Breast epithelium (tissue), 4 donors: ENCODE measurements at regions of chr18 and their contacts with region 1.

Region 1: DNA sequence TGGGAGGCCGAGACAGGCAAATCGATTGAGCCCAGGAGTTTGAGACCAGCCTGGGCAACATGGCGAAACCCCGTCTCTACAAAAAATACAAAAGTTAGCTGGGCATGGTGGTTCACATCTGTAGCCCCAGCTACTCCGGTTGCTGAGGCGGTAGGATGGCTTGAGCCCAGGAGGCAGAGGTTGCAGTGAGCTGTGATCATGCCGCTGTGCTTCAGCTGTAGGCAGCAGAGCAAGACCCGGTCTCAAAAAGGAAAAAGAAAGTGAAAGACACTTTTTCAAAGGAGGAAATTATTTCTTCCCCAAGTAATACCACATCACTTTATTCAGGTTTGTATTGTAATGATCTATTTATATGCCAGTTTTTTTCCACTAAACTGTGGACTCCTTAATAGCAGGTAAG is 35.7 kb upstream of the TAF4B start:
- DNase-seq: no peak
- H3K4me3 ChIP-seq: no peak overlapping the region
- H3K27ac ChIP-seq: no peak overlapping the region
- H3K4me1 ChIP-seq: no peaks in the 10 kb centered on the region
- H3K27me3 ChIP-seq: no peaks in the 10 kb centered on the region
- CTCF ChIP-seq: no peak
- POLR2A ChIP-seq: no peak

Region 2: DNA sequence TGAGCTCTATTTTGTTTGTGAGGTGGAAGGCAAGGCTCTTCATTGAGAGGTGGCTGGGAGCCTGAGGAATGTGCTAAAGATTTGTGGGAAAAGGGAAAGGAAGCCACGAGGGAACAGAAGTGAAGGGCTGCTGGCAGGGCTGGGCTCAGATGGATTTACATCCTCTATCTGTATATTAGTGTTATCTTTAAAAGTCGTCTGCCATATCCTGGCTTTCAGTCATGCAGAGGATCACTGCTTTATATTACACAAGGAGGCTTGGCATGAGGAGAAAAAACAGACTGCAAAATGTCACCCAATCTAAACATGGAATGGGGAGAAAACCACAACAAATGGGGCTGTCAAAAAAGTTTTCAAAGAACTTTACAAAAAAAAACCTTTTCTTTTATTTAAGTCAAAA is 1295.6 kb before region 1 on chr18:
- intact Hi-C with region 1: loop called (anchors 5 kb)
- DNase-seq: no peak
- H3K4me3 ChIP-seq: no peak overlapping the region
- H3K27ac ChIP-seq: no peak overlapping the region
- H3K4me1 ChIP-seq: no peaks in the 10 kb centered on the region
- H3K27me3 ChIP-seq: no peaks in the 10 kb centered on the region
- CTCF ChIP-seq: no peak
- POLR2A ChIP-seq: no peak

Region 3: DNA sequence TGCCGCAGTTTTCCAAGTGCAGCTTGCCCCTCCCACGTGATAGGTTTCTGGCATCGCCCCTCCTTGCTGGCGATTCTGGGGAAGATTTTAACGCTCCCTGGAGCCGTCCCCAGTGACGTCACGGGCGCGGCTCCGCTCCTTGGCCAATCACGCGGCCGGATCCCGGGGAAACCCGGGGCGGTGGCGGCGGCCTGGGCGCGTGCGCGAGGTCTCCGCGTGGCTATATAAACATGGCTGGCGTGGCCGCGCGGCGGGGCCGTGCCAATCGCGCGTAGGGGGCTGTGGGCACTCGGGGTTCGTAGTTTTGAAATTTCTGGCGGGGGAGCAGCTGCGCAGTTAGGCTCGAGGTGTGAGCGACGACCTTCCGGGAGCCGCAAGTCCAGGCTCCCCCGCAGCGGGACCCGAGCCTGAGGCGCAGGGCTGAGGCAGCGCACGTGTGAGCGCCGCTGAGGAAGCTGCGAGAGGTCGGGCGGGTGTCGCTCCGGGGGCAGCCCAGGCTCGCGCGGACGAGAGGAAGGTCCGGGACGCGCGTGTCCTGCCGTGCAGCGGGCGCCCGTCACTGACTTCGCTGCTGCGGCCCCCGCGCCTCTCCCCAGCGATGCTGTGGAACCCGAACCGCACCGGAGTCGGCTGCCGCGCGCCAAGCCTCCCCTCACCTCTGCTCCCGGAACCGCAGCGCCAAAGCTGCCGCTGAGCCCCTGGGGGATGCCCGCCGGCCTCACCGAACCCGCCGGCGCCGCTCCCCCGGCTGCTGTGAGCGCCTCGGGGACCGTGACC is 35.9 kb after region 1 on chr18 and contains the start of gene TAF4B:
- intact Hi-C with region 1: no loop called
- DNase-seq: peak; percentile 92
- H3K4me3 ChIP-seq: peak within 1 kb of the TSS; percentile 80 to 99 (median 93)
- H3K27ac ChIP-seq: peak within 1 kb of the TSS; percentile 80 to 83
- H3K4me1 ChIP-seq: no peaks in the 10 kb centered on the region
- H3K27me3 ChIP-seq: no peaks in the 10 kb centered on the region
- CTCF ChIP-seq: no peak
- POLR2A ChIP-seq: no peak
- total RNA-seq, gene TAF4B: 13.6 to 16.8 (median 14.1) TPM

Region 4: GRCh38 chr18:26252411-26252810 is 61.9 kb after region 1 on chr18:
- intact Hi-C with region 1: no loop called
- DNase-seq: no peak
- H3K4me3 ChIP-seq: no peak overlapping the region
- H3K27ac ChIP-seq: no peak overlapping the region
- H3K4me1 ChIP-seq: no peaks in the 10 kb centered on the region
- H3K27me3 ChIP-seq: no peaks in the 10 kb centered on the region
- CTCF ChIP-seq: no peak
- POLR2A ChIP-seq: no peak